ENCODE measurements at regions of chr2 and their contacts with region 1.

Region 1: GRCh38 chr2:197356136-197356535 is 45.6 kb upstream of the ANKRD44 start:
- DNase-seq: no peak
- ATAC-seq: peak; percentile 45
- H3K4me3 Mint-ChIP-seq: no peak overlapping the region
- H3K27ac Mint-ChIP-seq: no peak overlapping the region
- H3K4me1 Mint-ChIP-seq: peaks cover 18% of the 10 kb centered on the region
- H3K27me3 Mint-ChIP-seq: no peaks in the 10 kb centered on the region

Region 2: DNA sequence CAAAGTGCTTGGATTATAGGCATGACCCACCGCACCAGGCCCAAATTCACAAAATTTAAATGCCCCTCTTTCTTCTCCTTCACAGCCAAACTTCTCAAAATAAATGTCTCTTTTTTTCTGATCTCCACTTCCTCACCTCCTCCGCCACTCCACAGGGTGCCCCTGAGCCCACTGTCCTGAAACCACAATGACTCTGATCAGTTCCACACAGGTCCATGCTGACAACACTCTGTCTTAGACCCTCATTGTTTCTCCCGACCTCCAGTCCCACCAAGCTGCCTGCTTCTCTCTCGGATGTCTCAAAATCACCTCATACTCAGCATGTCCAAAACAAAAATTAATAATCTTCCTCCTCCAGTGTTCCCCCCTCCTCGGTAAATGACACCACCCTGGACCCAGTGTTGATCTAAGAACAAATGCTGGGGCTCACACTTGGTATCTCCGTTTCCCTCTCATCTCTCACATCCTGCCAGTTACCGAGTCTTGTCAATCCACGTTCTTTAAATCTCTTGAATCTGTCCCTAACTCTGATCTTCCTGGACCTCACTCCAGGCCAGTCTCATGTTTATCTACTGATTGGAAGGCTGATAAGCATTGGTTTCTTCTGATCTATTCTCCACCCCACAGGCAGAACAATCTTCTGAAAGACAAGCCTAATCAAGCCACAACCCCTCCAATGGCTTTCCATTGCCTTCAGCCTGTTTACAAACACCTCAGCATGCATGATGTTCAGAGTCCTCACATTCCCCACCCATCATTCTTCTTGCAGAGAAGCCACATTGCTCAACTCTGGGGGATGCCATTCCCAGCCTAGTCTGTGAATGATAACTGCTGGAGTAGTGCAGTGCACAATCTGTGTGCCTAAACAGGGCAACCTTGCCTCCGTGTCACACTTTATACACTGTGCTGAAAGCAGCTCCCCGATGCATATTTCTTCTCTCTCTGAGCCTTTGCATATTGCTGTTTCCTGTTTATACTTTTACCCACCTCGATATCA is 33.1 kb before region 1 on chr2:
- CTCF ChIA-PET with region 1: interaction called, 22 read pairs
- POLR2A ChIA-PET with region 1: interaction called, 4 read pairs
- DNase-seq: peak; percentile 46
- ATAC-seq: peak; percentile 77
- H3K4me3 Mint-ChIP-seq: peak overlapping the region; percentile 58
- H3K27ac Mint-ChIP-seq: peak overlapping the region; percentile 91
- H3K4me1 Mint-ChIP-seq: peaks cover 52% of the 10 kb centered on the region
- H3K27me3 Mint-ChIP-seq: no peaks in the 10 kb centered on the region

Region 3: DNA sequence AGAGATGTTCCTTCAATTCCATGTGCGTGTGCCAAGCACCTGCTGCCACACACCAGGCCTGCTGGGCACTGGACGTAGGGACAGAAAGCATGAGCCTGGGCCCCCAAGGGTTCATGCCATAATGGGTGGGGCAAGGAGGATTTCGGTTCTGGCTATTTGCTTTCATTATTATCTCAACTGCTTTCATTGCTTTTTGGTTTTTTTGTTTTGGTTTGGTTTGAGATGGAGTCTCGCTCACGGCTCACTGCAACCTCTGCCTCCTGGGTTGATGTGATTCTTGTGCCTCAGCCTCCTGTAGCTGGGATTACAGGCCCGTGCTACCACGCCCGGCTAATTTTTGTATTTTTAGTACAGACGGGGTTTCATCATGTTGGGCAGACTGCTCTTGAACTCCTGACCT is 21.5 kb after region 1 on chr2:
- CTCF ChIA-PET with region 1: no interaction called
- POLR2A ChIA-PET with region 1: no interaction called
- DNase-seq: no peak
- ATAC-seq: no peak
- H3K4me3 Mint-ChIP-seq: no peak overlapping the region
- H3K27ac Mint-ChIP-seq: no peak overlapping the region
- H3K4me1 Mint-ChIP-seq: peaks cover 24% of the 10 kb centered on the region
- H3K27me3 Mint-ChIP-seq: peaks cover 4% of the 10 kb centered on the region

Measured in activated CD8-positive, alpha-beta T cell treated with anti-CD3 and anti-CD28 coated beads, Interleukin-2, amount 10 ng/mL, durations not matched to agents 7 days and 5 days (primary cell).